ENCODE measurements at regions of chr3 and their contacts with region 1.

Region 1: DNA sequence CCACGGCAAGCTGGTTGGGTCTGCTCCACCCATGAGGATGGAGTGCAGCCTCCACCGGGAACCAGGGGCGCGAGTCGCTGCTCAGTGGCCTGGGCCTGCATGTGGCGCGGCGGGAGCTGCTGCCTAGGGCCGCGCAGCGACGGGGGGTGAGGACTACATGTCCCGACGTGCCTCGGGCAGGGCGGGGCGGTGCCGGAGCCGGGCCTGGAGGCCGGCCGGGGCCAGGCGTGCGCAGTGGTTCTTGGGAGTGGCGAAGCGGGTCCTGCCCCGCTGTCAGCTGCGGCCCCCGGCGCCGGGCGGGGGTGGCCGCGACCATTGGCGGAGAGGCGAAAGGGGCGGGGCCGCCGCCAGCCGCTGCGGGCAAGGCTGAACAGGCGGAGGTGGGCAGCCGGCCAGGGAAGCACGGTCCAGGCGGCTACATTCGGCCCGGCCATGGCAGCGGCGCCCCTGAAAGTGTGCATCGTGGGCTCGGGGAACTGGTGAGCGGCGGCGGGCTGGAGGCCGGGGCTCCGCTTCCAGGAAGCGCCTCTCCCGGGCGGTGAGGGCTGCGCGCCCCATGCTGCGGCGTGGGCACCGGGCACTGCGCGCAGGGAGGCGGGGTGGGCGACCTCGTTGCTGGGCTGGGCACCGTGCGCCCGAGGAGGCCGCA is at the start of gene GPD1L:
- DNase-seq: peak; percentile 80 to 97
- H3K4me3 ChIP-seq: peak within 1 kb of the TSS; percentile 87 to 89
- H3K27ac ChIP-seq: peak within 1 kb of the TSS; percentile 70 to 75
- H3K4me1 ChIP-seq: peaks cover 6 to 24% of the 10 kb centered on the region in 2 donors
- H3K27me3 ChIP-seq: no peaks in the 10 kb centered on the region
- CTCF ChIP-seq: peak in 1 of 3 experiments; percentile 7
- total RNA-seq, gene GPD1L: 14.4 TPM

Region 2: GRCh38 chr3:31968927-31969418 is 137.4 kb before region 1 on chr3:
- intact Hi-C with region 1: loop called (anchors 5 kb)
- DNase-seq: peak in 1 of 2 donors; percentile 77
- H3K4me3 ChIP-seq: peak overlapping the region in 1 of 2 donors; percentile 41
- H3K27ac ChIP-seq: peak overlapping the region; percentile 81 to 89
- H3K4me1 ChIP-seq: peaks cover 3 to 27% of the 10 kb centered on the region in 2 donors
- H3K27me3 ChIP-seq: no peaks in the 10 kb centered on the region
- CTCF ChIP-seq: no peak

Region 3: GRCh38 chr3:32082721-32083120 is 23.7 kb before region 1 on chr3:
- intact Hi-C with region 1: loop called (anchors 2 kb)
- DNase-seq: no peak
- H3K4me3 ChIP-seq: no peak overlapping the region
- H3K27ac ChIP-seq: peak overlapping the region; percentile 59 to 68
- H3K4me1 ChIP-seq: peaks cover 0 to 14% of the 10 kb centered on the region in 2 donors
- H3K27me3 ChIP-seq: no peaks in the 10 kb centered on the region
- CTCF ChIP-seq: peak in 1 of 3 experiments; percentile 22

Region 4: GRCh38 chr3:32510075-32510724 is 403.8 kb after region 1 on chr3:
- intact Hi-C with region 1: no loop called
- DNase-seq: peak in 1 of 2 donors; percentile 79
- H3K4me3 ChIP-seq: no peak overlapping the region
- H3K27ac ChIP-seq: no peak overlapping the region
- H3K4me1 ChIP-seq: no peaks in the 10 kb centered on the region
- H3K27me3 ChIP-seq: no peaks in the 10 kb centered on the region
- CTCF ChIP-seq: peak; percentile 52 to 78 (median 55)

Measured in ascending aorta (tissue), 2 donors.